ENCODE measurements at regions of chr11 and their contacts with region 1.

Region 1: DNA sequence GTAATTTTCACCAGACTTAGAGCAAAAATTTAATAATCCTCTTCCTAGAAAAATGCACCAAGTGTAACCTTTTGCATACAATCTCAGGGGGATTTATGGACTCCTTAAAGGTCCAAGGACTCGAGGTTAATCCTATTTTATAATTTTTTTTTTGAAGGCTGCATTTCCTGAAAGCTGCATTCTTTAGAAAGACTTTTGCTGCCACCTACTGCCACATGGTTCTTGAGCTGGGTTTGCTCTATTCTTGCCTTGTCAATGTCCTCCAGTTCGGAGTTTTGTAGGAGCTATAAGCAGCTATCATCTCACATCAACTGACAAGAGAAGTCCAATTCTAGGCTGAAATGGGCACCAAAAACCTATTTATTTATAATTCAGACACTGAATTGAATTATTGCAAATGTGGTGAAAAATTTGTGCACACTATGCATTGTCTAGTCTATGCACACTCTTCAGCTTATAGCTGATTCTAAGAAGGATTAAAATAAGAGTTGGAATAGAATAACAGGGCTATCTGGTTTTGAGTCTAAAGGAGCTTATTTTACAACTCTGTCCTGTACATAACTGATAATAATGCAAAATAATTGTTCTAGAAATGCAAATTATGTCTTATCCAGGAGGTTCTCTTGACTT is 31.3 kb downstream of the TRAF6 start:
- DNase-seq: peak in 3 of 10 donors; percentile 36 to 57 (median 48)

Region 2: GRCh38 chr11:36041988-36042611 is 436.7 kb before region 1 on chr11:
- intact Hi-C with region 1: loop called (anchors 5 kb)
- DNase-seq: no peak

Region 3: DNA sequence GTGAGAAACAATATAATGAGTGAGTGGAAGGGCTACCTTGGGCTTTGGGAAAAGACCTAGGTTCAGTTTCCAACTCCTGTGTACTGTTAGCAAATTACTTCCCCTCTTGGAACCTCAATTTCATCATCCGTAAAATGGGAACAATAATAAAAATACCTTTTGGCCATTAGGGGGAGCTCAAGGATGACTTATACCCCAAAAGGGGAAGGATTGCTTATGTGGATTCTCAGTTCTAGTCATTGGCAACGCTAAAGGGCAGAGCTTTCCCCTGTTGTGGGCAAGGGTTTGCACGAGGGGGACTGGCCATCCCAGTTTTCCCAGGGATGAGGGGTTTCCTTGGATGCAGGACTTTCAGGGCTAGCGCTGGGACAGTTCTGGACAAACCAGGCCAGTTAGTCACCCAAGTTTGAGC is 186.5 kb before region 1 on chr11:
- intact Hi-C with region 1: loop called (anchors 2 kb)
- DNase-seq: no peak

Region 4: DNA sequence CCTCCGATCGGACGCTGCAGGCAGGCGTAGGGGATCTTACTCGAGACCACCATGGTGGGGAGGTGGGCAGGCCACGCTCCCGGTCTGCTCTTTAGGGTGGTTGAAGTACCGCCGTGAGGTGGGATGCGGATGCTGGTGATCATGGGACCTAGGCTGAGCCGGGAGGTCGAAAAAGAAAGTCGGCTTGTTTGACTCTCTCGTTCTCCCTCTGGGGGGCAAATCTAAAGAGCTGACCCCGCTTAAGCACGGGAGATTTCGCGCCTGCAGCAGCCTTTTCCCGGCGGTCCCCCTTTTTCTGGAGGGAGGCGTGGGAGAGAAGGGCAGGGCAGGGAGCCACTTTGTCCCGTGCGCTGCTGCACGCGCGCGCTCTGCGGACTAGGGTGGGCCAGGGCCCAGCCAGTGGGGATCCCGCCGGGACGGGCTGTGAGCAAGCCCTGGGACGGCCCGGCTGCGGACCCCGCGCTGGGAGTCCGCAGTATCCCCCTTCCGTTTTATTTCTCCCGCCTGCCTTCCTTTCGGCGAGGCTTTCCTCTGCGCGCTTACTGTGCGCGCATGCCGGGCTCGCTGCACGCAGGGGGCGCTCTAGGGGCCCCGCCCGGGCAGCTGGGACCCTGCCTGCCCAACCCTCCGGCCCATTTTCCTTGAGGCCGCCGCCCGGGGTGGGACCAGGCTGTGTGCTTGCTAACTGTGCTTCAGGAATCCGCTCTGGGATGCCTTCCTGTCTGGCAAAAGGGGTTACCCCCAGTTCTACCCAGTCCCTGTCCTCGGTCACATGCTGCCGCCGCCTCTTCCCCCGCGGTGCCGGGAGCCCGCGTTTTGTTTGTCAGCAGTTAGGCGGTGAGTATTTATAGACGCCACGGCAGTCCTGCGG is 101.7 kb before region 1 on chr11:
- intact Hi-C with region 1: loop called (anchors 5 kb)
- DNase-seq: peak in 7 of 10 donors; percentile 15 to 93 (median 46)

Region 5: DNA sequence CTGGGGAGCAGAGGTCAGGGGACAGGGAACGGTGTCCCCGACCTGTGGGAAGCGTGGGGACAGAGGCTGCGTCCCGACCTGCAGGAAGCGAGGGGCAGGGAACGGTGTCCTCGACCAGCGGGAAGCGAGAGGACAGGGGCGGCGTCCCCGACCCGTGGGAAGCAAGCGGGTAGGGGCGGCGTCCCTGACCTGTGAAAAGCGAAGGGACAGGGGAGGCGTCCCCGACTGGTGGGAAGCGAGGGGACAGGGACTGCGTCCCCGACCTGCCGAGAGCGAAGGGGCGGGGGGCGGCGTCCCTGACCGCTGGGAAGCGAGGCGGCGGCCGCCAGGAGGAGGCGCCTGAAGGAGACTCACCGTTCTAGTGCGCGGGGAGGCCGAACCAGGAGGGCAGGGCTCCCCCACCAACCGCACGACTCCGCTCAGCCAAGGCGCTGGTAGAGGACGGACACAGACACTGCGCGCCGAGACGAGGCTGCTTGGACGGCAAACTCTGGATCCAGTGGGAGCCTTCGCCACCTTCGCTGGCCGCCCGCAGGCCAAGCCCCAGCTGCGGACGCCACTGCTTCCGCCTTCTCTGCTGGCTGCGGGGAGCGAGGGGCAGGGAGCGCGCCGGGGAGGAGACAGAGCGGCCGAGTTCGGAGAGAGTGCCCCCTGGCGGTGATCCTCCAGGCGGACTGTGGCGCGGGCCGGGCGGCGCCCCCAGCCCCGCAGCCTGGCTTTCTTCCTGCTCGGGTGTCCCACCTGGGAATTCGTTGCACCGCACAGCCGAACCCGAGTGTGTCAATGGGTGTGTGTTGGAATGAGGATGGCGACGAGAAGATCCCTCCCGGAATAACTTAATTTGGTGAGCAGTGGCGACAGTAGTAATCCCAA is 31.1 kb after region 1 on chr11 and contains the start of gene TRAF6:
- intact Hi-C with region 1: no loop called
- DNase-seq: peak; percentile 80 to 98 (median 88)

Region 6: DNA sequence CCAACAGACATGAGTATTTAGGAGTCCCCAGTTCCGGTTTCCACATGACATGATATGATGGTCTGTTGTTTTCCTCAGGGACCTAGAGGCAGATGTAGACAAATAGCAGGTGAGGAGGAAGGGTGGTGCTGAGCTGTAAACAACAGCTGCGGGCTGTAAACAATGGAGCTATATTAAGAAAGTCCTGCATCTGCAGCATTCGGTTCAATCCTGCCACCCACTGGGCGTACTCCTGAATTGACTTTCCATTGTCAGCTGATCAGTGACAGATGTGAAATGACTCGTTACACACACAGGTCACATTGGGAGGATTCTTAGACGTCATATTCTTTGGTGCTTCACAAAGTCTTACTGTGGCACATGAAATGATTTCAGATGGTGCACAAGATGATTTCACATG is 62.2 kb after region 1 on chr11:
- intact Hi-C with region 1: no loop called
- DNase-seq: peak in 5 of 10 donors; percentile 9 to 89 (median 41)

Measured in posterior cingulate gyrus (tissue), 11 donors.